ENCODE measurements at regions of chr3 and their contacts with region 1.

Region 1: GRCh38 chr3:178385280-178385952 is 150.8 kb upstream of the KCNMB2 start:
- DNase-seq: no peak
- ATAC-seq: peak in 6 of 8 donors; percentile 52 to 74 (median 62)
- H3K4me3 ChIP-seq: peak overlapping the region in 2 of 10 donors; percentile 2 to 28
- H3K27ac ChIP-seq: peak overlapping the region in 6 of 10 donors; percentile 25 to 78 (median 69)
- H3K4me1 ChIP-seq: peaks cover 7 to 41% (median 30%) of the 10 kb centered on the region in 9 donors
- H3K27me3 ChIP-seq: no peaks in the 10 kb centered on the region
- CTCF ChIP-seq: peak; percentile 66 to 92 (median 86)

Region 2: GRCh38 chr3:176514297-176514696 is 1871.1 kb before region 1 on chr3:
- intact Hi-C with region 1: loop called in 2 of 10 experiments (anchors 10 kb)
- DNase-seq: peak in 1 of 2 donors; percentile 22
- ATAC-seq: peak in 2 of 8 donors; percentile 46 to 49
- H3K4me3 ChIP-seq: no peak overlapping the region
- H3K27ac ChIP-seq: no peak overlapping the region
- H3K4me1 ChIP-seq: no peaks in the 10 kb centered on the region
- H3K27me3 ChIP-seq: no peaks in the 10 kb centered on the region
- CTCF ChIP-seq: peak; percentile 29 to 72 (median 54)

Region 3: GRCh38 chr3:177041021-177041729 is 1344.2 kb before region 1 on chr3:
- intact Hi-C with region 1: loop called in 2 of 10 experiments (anchors 10 kb)
- DNase-seq: peak in 1 of 2 donors; percentile 30
- ATAC-seq: peak; percentile 78 to 94 (median 88)
- H3K4me3 ChIP-seq: no peak overlapping the region
- H3K27ac ChIP-seq: peak overlapping the region in 8 of 10 donors; percentile 26 to 72 (median 52)
- H3K4me1 ChIP-seq: peaks cover 5 to 46% (median 29%) of the 10 kb centered on the region in 9 donors
- H3K27me3 ChIP-seq: no peaks in the 10 kb centered on the region
- CTCF ChIP-seq: no peak

Region 4: DNA sequence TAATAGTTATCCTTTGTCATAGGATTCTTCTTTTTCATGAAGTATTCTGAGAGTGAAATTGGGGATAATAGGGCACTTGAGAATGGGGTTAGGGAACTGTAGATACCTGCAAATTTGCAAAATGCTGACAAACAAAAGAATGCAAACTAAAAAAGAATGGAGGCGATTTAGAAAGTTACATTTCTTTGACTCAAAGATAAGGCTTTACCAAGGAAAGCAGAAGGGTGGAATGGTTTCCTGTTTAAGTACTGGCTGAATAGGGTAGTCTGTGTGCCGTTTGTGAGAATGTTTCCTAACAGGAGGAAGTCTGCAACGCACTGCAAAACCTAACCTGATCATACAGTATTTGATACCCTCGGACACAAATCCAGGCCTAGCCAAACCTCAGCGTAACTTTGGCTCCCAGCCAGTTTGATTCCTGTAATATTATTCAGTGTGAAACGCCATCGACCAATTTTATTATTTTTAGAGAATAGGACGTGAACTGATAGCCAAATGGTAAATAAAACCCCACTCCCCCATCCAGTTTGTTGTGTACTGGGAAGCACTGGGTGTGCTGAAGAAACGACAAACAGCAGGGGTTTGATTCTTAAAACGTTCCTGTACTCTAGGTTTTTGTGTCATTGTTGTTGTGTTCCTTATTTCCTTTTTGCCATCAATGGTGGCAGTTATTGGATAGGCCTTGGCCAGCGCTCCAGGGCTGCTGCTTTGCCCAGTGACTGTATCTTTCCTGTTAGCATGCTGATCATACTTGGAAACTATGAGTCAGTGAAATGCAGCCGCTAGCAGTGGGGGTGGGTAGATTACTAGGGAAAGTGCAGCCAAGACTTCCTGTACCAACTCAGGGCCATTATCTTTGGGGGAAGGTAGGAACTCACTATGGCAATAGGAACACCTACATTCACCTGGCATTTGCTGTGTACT is 1040.1 kb before region 1 on chr3:
- intact Hi-C with region 1: loop called in 1 of 10 experiments (anchors 10 kb)
- DNase-seq: peak; percentile 79 to 90
- ATAC-seq: peak; percentile 93 to 99 (median 98)
- H3K4me3 ChIP-seq: peak overlapping the region in 1 of 10 donors; percentile 5
- H3K27ac ChIP-seq: peak overlapping the region; percentile 86 to 96 (median 90)
- H3K4me1 ChIP-seq: peaks cover 14 to 70% (median 55%) of the 10 kb centered on the region in 9 donors
- H3K27me3 ChIP-seq: no peaks in the 10 kb centered on the region
- CTCF ChIP-seq: no peak

Region 5: GRCh38 chr3:178325330-178325729 is 60.1 kb before region 1 on chr3:
- intact Hi-C with region 1: loop called in 1 of 10 experiments (anchors 5 kb)
- DNase-seq: no peak
- ATAC-seq: peak in 1 of 8 donors; percentile 25
- H3K4me3 ChIP-seq: no peak overlapping the region
- H3K27ac ChIP-seq: peak overlapping the region in 4 of 10 donors; percentile 17 to 44 (median 41)
- H3K4me1 ChIP-seq: peaks cover 6 to 41% (median 21%) of the 10 kb centered on the region in 9 donors
- H3K27me3 ChIP-seq: no peaks in the 10 kb centered on the region
- CTCF ChIP-seq: peak in 8 of 9 donors; percentile 8 to 68 (median 54)

Region 6: DNA sequence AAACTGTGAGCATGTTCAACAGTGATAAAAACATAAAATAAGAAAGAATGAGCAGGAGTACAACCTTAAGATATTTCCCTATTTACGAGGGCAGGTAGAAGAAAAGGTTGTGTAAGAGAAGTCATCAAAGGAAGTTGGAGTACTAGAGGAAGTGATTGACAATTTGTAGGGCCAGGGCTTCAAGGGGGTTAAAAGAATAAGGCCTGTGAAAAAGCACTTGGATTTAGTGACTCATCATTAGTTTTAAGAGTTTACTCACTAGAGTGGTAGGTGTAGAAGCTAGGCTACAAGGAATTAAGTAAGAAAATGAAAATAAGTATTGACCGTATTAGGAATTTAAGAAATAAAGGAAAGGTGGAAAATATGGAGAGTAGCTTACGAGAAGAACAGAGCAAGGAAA is 841.9 kb after region 1 on chr3:
- intact Hi-C with region 1: no loop called
- DNase-seq: no peak
- ATAC-seq: no peak
- H3K4me3 ChIP-seq: no peak overlapping the region
- H3K27ac ChIP-seq: no peak overlapping the region
- H3K4me1 ChIP-seq: peaks cover 0 to 14% (median 0%) of the 10 kb centered on the region in 9 donors
- H3K27me3 ChIP-seq: no peaks in the 10 kb centered on the region
- CTCF ChIP-seq: no peak

Measured in heart right ventricle (tissue), 16 donors.